ENCODE measurements at regions of chr13 and their contacts with region 1.

Region 1: GRCh38 chr13:84025824-84026223 is 143.6 kb upstream of the SLITRK1 start:
- DNase-seq: no peak
- ATAC-seq: no peak
- H3K4me3 Mint-ChIP-seq: no peak overlapping the region
- H3K27ac Mint-ChIP-seq: no peak overlapping the region
- H3K4me1 Mint-ChIP-seq: no peaks in the 10 kb centered on the region
- H3K27me3 Mint-ChIP-seq: no peaks in the 10 kb centered on the region

Region 2: DNA sequence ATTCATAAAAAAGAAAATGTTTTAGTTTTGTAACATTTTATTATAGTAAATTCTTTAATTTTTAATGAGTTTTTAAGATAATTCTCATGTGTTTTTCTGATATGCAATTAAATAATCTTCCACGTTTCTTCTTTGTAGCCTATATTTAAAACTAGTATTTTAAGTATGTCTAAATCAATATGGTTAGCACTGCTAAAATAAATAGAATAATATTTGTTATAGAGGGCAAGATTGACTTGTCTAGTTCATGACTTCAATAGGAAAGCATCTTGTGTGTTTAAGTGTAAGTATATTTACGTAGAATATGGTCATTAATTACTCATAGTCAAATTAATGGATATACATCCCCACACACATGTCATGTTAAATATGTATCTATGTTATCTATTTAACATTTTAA is 21.7 kb before region 1 on chr13:
- CTCF ChIA-PET with region 1: interaction called, 3 read pairs
- POLR2A ChIA-PET with region 1: no interaction called
- intact Hi-C with region 1: loop called in 1 of 2 experiments (anchors 2 kb)
- DNase-seq: no peak
- ATAC-seq: no peak
- H3K4me3 Mint-ChIP-seq: no peak overlapping the region
- H3K27ac Mint-ChIP-seq: no peak overlapping the region
- H3K4me1 Mint-ChIP-seq: no peaks in the 10 kb centered on the region
- H3K27me3 Mint-ChIP-seq: no peaks in the 10 kb centered on the region

Region 3: DNA sequence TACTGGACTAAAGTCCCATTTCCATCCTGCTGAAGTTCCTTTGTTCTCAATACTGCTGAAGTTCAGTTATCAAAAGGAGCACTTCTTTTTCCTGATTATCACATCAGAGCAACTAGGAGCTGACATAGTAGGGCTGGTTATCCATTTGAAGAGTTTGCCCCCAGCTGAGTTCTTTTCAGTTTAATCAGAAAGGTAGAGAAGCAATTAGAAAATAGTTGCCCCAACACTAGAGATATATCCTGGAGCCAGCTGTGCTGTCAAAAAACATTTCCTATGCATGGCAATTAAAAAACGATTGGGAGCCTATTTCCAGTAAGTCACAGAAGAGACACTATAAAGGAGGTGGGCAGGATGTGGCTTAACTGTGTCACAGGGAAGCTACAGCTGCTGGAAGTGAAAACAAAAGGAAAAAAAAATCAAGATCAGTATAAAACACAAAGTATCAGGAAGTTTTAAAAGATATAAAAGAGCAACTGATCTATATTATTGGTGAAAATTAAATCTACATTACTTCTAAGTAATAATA is 12.2 kb after region 1 on chr13:
- CTCF ChIA-PET with region 1: no interaction called
- POLR2A ChIA-PET with region 1: no interaction called
- intact Hi-C with region 1: no loop called
- DNase-seq: no peak
- ATAC-seq: no peak
- H3K4me3 Mint-ChIP-seq: no peak overlapping the region
- H3K27ac Mint-ChIP-seq: no peak overlapping the region
- H3K4me1 Mint-ChIP-seq: peaks cover 16% of the 10 kb centered on the region
- H3K27me3 Mint-ChIP-seq: peaks cover 2% of the 10 kb centered on the region